ENCODE measurements at regions of chr22 and their contacts with region 1.

Region 1: DNA sequence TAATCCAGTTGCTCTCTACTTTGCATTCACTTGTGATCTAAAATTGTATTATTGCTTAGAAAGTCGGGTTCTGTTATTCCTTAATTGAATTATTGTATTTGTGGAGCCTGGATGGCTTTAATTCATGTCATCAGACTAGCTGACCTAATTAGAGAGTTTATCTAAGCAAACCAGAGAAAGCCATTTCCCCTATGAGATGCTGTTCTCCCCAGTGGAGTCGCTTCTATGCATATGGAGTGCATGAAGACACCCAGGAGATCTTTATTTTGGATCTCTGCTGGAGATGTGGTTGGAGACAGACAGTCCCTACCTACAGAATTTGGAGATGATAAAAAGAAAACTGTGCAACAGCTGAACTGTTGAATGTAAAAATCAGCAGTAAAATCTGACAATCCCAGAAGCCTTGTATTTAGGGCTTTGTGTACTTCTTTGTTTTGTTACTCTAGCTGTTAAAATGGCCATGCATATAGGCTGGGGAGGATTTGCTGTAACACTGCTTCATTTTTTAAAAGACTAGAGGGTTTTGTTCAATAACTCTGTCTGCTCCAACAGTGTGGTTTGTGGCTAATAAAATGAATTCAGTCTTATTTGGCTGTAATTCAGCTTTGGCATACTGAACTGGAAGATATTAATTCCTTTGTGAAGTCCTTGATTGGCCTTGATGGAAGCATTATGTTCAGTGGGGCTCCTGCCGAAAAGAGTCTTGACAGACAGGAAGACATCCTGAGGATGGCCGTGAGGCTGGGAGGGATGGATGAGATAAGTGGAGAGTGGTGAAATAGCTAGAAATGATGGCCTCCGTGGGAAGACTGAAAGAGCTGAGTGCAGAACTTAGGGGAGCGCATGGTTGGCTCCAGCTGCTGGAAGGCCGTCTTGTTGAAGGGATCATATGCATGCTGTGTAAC is 45.0 kb upstream of the MYO18B start:
- H3K4me3 Mint-ChIP-seq: no peak overlapping the region
- H3K27ac Mint-ChIP-seq: no peak overlapping the region
- H3K4me1 Mint-ChIP-seq: peaks cover 26% of the 10 kb centered on the region
- H3K27me3 Mint-ChIP-seq: no peaks in the 10 kb centered on the region

Region 2: DNA sequence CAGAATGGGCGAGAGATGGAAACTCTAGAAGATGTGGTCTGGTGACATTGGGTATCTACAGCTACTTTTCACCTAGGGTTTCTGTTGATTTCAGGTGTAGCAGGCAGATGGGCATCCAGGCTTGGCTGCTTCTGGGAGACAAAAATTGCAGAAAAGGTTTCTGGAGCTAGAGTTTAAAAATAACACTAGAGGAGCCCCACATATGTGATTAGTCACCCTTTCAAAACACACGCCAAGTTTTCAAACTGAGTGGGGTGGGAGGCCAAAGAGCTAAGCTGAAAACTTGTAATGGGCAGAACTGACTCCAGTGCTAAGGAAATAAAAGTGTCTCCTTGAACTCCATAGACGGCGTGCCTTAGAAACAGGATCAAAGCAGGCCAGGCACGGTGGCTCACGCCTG is 51.7 kb before region 1 on chr22:
- intact Hi-C with region 1: loop called (anchors 10 kb)
- H3K4me3 Mint-ChIP-seq: no peak overlapping the region
- H3K27ac Mint-ChIP-seq: peak overlapping the region; percentile 16
- H3K4me1 Mint-ChIP-seq: peaks cover 54% of the 10 kb centered on the region
- H3K27me3 Mint-ChIP-seq: no peaks in the 10 kb centered on the region

Region 3: GRCh38 chr22:25853501-25854284 is 156.7 kb after region 1 on chr22:
- intact Hi-C with region 1: no loop called
- H3K4me3 Mint-ChIP-seq: no peak overlapping the region
- H3K27ac Mint-ChIP-seq: no peak overlapping the region
- H3K4me1 Mint-ChIP-seq: no peaks in the 10 kb centered on the region
- H3K27me3 Mint-ChIP-seq: no peaks in the 10 kb centered on the region

Measured in dendritic cell treated with granulocyte-macrophage colony-stimulating factor and Interleukin-4, amounts not matched to agents 40 ng/mL and 50 ng/mL, for 4 days (primary cell).